Left lung (tissue), 14 donors: ENCODE measurements at regions of chr13 and their contacts with region 1.

Region 1: GRCh38 chr13:77274126-77274525 is 52.8 kb downstream of the MYCBP2 start:
- DNase-seq: no peak
- ATAC-seq: no peak
- H3K4me3 ChIP-seq: no peak overlapping the region
- H3K27ac ChIP-seq: no peak overlapping the region
- H3K4me1 ChIP-seq: no peaks in the 10 kb centered on the region
- H3K27me3 ChIP-seq: no peaks in the 10 kb centered on the region
- CTCF ChIP-seq: no peak

Region 2: DNA sequence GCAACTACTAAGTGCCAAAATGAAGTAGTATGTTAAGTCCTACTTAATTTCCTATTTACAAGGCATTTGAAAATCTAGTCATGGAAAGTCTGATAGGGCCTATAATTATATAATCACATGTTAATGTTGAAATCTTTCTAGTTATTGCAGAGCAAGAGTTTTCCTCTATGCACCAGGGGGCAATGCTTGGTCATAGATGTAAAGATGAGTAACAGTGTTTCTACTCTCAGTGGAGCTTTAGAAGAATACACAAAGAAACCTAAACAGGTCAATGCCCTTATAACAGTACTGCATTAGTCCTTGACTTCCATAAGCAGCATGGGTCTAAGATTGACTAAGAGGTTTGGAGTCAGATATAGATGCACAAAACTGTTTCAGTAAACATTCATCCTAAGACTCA is 606.6 kb before region 1 on chr13:
- intact Hi-C with region 1: no loop called
- DNase-seq: peak in 2 of 4 donors; percentile 52 to 74
- ATAC-seq: peak; percentile 60
- H3K4me3 ChIP-seq: no peak overlapping the region
- H3K27ac ChIP-seq: no peak overlapping the region
- H3K4me1 ChIP-seq: peaks cover 0 to 25% of the 10 kb centered on the region in 2 donors
- H3K27me3 ChIP-seq: no peaks in the 10 kb centered on the region
- CTCF ChIP-seq: no peak

Region 3: GRCh38 chr13:76812206-76812897 is 461.8 kb before region 1 on chr13:
- intact Hi-C with region 1: no loop called
- DNase-seq: peak in 2 of 4 donors; percentile 42 to 43
- ATAC-seq: peak; percentile 57
- H3K4me3 ChIP-seq: no peak overlapping the region
- H3K27ac ChIP-seq: no peak overlapping the region
- H3K4me1 ChIP-seq: no peaks in the 10 kb centered on the region
- H3K27me3 ChIP-seq: no peaks in the 10 kb centered on the region
- CTCF ChIP-seq: no peak

Region 4: GRCh38 chr13:77477299-77477848 is 203.2 kb after region 1 on chr13:
- intact Hi-C with region 1: loop called in 1 of 2 experiments (anchors 10 kb)
- DNase-seq: no peak
- ATAC-seq: peak; percentile 65
- H3K4me3 ChIP-seq: no peak overlapping the region
- H3K27ac ChIP-seq: no peak overlapping the region
- H3K4me1 ChIP-seq: peaks cover 0 to 5% of the 10 kb centered on the region in 2 donors
- H3K27me3 ChIP-seq: no peaks in the 10 kb centered on the region
- CTCF ChIP-seq: no peak